Prostate gland (tissue), 2 donors: ENCODE measurements at regions of chr3 and their contacts with region 1.

Region 1: GRCh38 chr3:82133070-82133606 is 371.7 kb upstream of the GBE1 start:
- DNase-seq: peak; percentile 50
- H3K4me3 ChIP-seq: no peak overlapping the region
- H3K27ac ChIP-seq: no peak overlapping the region
- H3K4me1 ChIP-seq: no peaks in the 10 kb centered on the region
- H3K27me3 ChIP-seq: peaks cover 2% of the 10 kb centered on the region
- CTCF ChIP-seq: peak; percentile 65 to 79 (median 76)
- POLR2A ChIP-seq: no peak

Region 2: GRCh38 chr3:81666493-81667121 is 466.5 kb before region 1 on chr3:
- intact Hi-C with region 1: loop called (anchors 5 kb)
- DNase-seq: no peak
- H3K4me3 ChIP-seq: no peak overlapping the region
- H3K27ac ChIP-seq: no peak overlapping the region
- H3K4me1 ChIP-seq: no peaks in the 10 kb centered on the region
- H3K27me3 ChIP-seq: no peaks in the 10 kb centered on the region
- CTCF ChIP-seq: peak in 2 of 4 experiments; percentile 49 to 69
- POLR2A ChIP-seq: no peak

Region 3: DNA sequence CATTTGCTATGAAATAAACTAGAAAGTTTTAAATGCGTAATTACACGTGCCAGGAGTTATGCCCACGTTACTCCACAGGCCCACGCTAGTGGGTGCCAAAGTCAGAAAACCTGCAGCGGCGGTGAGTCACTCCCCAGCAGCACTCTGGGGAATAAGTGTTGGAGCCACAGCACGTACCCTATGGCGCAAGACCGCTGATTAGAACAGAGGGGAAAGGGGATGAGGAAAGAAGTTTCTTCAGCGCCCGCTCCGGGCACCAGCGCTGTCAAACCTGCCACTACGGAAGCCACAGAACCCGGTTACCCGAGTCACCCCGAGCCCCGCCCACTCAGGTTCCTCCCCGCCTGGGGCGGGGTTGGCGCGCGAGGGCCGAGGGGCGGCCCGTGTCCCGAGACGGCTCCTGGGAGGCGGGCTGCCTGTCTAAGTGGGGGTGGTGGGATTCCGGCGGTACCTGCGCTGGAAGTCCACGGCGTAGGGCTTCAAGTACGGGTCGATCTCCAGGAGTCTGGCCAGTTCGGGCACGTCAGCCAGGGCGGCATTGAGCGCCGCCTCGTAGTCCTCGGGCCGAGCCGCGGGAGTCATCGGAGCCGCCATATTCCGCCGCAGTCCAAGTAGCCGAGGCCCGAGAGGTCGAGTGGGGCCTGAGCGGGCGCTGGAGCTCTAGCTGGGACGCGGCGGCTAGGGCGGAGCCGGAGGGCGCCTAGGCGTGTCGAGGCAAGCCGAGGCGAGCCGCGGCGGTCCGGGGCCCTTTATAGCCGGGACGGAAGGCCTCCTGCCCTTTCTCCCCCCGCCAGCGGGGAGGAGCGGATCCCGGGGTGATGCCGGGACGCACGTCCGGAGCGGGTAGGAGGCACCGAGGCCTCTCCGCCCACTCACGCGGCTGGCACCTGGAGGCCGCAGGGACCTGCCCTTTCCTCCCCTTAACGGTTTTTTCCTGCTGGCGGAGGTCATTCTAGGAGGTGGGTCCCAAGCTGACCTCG is 371.9 kb before region 1 on chr3 and contains the start of gene GBE1:
- intact Hi-C with region 1: loop called (anchors 10 kb)
- DNase-seq: peak; percentile 92
- H3K4me3 ChIP-seq: peak within 1 kb of the TSS; percentile 81
- H3K27ac ChIP-seq: peak within 1 kb of the TSS; percentile 99
- H3K4me1 ChIP-seq: no peaks in the 10 kb centered on the region
- H3K27me3 ChIP-seq: no peaks in the 10 kb centered on the region
- CTCF ChIP-seq: peak in 2 of 4 experiments; percentile 33 to 50
- POLR2A ChIP-seq: peak; percentile 59
- total RNA-seq, gene GBE1: 15.8 to 18.3 TPM

Region 4: DNA sequence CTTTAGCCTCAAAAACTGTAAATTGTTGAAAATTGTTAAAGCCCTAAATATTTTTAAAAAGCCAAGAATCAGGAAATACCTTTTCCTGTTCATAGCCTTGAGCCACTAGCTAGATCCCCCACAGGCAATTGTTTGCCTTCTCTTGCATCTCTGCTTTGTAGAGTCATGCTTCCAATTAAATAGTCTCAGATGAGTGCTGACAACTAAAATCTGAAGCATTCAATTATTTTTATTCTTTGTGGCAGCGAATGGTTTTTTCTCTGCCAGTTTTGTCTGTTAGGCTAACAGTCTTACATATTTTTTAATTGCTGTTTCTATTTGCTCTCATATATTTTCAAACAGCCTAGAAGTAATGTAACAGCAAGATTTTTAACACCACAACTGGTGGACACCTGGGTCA is 94.6 kb before region 1 on chr3:
- intact Hi-C with region 1: no loop called
- DNase-seq: no peak
- H3K4me3 ChIP-seq: no peak overlapping the region
- H3K27ac ChIP-seq: no peak overlapping the region
- H3K4me1 ChIP-seq: no peaks in the 10 kb centered on the region
- H3K27me3 ChIP-seq: no peaks in the 10 kb centered on the region
- CTCF ChIP-seq: no peak
- POLR2A ChIP-seq: no peak